Naive thymus-derived CD4-positive, alpha-beta T cell (primary cell): ENCODE measurements at regions of chr6 and their contacts with region 1.

Region 1: DNA sequence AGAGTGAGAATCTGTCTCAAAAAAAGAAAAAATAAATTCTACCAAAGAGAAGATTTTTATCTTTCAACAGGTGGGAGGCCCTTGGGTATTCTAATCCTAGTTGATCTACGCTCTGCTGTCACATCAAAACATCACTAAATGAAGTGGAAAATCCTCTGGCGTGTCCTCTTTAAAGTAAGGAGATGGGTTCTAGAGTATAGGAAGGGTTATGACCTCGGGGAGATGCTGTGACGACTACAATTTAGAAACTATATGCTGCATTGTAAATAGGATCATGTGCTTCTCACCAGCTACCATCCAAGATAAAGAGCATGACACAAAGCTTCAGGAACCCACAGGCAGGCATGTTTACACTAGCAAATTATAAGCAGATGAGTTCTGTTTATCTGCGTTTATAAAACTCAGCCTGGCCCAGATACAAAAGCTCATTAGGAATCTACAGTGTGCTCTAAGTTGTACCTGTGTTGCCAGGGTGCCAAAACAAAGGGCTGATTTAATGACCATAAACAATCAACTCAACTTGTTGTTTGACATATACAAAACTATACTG is 197.1 kb upstream of the PLN start:
- DNase-seq: no peak
- ATAC-seq: no peak
- H3K4me3 ChIP-seq: no peak overlapping the region
- H3K4me3 Mint-ChIP-seq: no peak overlapping the region
- H3K27ac ChIP-seq: no peak overlapping the region
- H3K27ac Mint-ChIP-seq: no peak overlapping the region
- H3K4me1 ChIP-seq: no peaks in the 10 kb centered on the region
- H3K4me1 Mint-ChIP-seq: peaks cover 0 to 4% (median 0%) of the 10 kb centered on the region in 7 donors
- H3K27me3 ChIP-seq: no peaks in the 10 kb centered on the region
- H3K27me3 Mint-ChIP-seq: no peaks in the 10 kb centered on the region

Region 2: DNA sequence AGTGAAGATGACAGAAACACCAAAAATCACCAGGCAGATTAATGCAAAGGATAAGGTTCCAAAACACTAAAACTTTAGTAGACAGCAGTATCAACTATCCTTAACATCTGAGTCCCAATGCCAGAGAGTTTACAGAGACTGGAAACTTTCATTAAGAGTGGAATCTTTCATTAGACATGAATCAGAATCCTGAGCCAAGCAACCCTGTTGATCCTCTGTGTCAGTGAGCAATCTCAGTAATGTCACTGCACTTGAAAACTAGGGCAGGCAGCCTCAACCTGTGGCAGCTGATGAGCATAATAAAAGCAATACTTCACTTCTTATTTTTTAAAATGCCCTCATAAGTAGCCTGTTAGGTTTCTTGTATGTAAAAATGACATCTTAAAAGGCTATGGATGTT is 55.6 kb before region 1 on chr6:
- CTCF ChIA-PET with region 1: no interaction called
- POLR2A ChIA-PET with region 1: no interaction called
- intact Hi-C with region 1: loop called in 1 of 2 experiments (anchors 2 kb)
- DNase-seq: no peak
- ATAC-seq: no peak
- H3K4me3 ChIP-seq: no peak overlapping the region
- H3K4me3 Mint-ChIP-seq: no peak overlapping the region
- H3K27ac ChIP-seq: no peak overlapping the region
- H3K27ac Mint-ChIP-seq: no peak overlapping the region
- H3K4me1 ChIP-seq: no peaks in the 10 kb centered on the region
- H3K4me1 Mint-ChIP-seq: no peaks in the 10 kb centered on the region
- H3K27me3 ChIP-seq: no peaks in the 10 kb centered on the region
- H3K27me3 Mint-ChIP-seq: peaks cover 4 to 24% (median 13%) of the 10 kb centered on the region in 5 donors